ENCODE measurements at regions of chr11 and their contacts with region 1.

Region 1: GRCh38 chr11:47980245-47981049 is at the start of gene PTPRJ:
- DNase-seq: no peak
- H3K4me3 ChIP-seq: peak within 1 kb of the TSS; percentile 70 to 84 (median 78)
- H3K27ac ChIP-seq: peak within 1 kb of the TSS; percentile 68 to 74 (median 71)
- H3K4me1 ChIP-seq: peaks cover 15 to 28% (median 25%) of the 10 kb centered on the region in 4 donors
- H3K27me3 ChIP-seq: peaks cover 0 to 6% (median 0%) of the 10 kb centered on the region in 4 donors
- CTCF ChIP-seq: no peak
- EP300 ChIP-seq: no peak
- POLR2A ChIP-seq: no peak
- total RNA-seq, gene PTPRJ: 8.3 to 14.1 (median 10.5) TPM

Region 2: GRCh38 chr11:47946682-47947575 is 33.5 kb before region 1 on chr11:
- intact Hi-C with region 1: loop called (anchors 5 kb)
- DNase-seq: peak; percentile 92
- H3K4me3 ChIP-seq: no peak overlapping the region
- H3K27ac ChIP-seq: peak overlapping the region; percentile 25 to 64 (median 40)
- H3K4me1 ChIP-seq: peaks cover 2 to 16% (median 12%) of the 10 kb centered on the region in 4 donors
- H3K27me3 ChIP-seq: no peaks in the 10 kb centered on the region
- CTCF ChIP-seq: no peak
- EP300 ChIP-seq: no peak
- POLR2A ChIP-seq: no peak

Region 3: DNA sequence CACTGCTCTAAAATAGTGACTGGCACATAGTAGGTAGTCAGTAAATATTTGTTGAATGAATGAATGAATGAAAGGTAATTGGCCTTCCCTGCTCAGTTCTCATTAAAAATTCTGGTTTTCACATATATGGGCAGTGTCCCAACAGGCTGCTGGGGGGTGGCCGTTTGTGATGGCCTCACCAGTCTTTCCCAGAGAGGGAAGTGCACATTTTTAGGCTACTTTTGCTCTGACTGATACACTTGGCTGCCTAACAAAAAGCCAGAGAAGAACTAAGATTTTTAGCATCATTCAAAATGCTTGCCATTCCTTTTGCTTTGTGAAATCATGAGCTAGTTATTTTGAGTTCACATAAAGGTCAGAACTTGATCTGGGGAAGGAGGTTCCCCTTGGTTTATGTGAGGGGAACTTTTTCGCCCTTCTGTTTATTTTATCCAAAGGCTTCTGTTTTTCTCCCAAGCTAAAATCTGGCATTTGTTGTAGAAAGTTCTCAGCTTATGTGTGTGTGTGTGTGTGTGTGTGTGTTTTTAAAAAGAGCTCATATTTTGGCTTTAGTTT is 83.1 kb after region 1 on chr11:
- intact Hi-C with region 1: loop called (anchors 5 kb)
- DNase-seq: no peak
- H3K4me3 ChIP-seq: no peak overlapping the region
- H3K27ac ChIP-seq: peak overlapping the region; percentile 64 to 71 (median 70)
- H3K4me1 ChIP-seq: peaks cover 15 to 41% (median 30%) of the 10 kb centered on the region in 4 donors
- H3K27me3 ChIP-seq: no peaks in the 10 kb centered on the region
- CTCF ChIP-seq: no peak
- EP300 ChIP-seq: no peak
- POLR2A ChIP-seq: no peak

Region 4: DNA sequence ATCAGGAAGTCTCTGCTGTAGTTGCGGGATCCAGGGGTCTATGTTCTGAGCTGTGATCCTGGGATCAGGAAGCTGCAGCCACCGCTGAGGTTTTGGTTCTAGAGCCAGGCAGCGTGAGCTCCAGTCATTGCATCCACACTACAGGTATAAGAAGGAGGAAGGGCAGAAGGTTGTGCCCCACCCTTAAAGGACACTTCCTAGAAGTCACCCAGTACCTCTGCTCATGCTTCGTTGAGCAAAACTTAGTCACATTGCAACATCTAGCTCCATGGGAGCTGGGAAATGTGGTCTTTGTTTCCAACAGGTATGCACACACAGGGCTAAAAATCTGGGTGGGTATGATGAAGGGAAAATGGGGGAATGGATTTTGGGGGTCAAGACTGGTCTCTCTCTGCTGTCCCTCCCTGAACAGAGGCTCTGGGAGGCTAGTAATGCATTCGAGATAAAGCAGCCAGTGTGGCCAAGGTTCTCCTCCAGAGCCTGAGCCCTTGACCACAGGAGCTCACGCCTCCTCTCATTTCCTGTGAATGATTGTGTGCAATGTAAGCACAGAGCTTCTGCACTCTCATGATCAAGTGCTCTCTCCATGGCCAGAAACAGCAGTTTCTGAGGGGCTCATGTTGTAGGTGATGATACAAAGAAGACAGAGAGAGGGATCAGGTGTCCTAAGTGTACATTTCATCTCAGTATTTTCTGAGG is 149.4 kb after region 1 on chr11:
- intact Hi-C with region 1: no loop called
- DNase-seq: no peak
- H3K4me3 ChIP-seq: no peak overlapping the region
- H3K27ac ChIP-seq: no peak overlapping the region
- H3K4me1 ChIP-seq: no peaks in the 10 kb centered on the region
- H3K27me3 ChIP-seq: no peaks in the 10 kb centered on the region
- CTCF ChIP-seq: no peak
- EP300 ChIP-seq: no peak
- POLR2A ChIP-seq: no peak

Region 5: DNA sequence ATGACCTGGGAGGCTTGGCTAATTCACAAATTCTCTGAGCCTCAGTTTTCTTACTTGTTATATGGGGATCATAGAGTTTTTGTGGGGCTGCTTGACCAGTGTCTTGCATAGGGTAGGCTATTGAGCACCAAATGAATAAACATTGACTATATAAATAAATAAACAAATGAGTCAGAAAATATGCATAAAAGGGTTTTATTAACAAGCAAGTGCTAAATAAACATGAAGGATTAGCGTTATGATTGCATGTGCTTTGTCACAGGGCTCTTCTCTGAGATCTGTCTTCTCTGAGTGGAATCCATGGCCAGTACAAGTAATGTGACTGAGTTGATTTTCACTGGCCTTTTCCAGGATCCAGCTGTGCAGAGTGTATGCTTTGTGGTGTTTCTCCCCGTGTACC is 236.1 kb after region 1 on chr11 and contains the start of gene OR4B1:
- intact Hi-C with region 1: no loop called
- DNase-seq: no peak
- H3K4me3 ChIP-seq: no peak within 1 kb of the TSS
- H3K27ac ChIP-seq: no peak within 1 kb of the TSS
- H3K4me1 ChIP-seq: no peaks in the 10 kb centered on the region
- H3K27me3 ChIP-seq: no peaks in the 10 kb centered on the region
- CTCF ChIP-seq: no peak
- EP300 ChIP-seq: no peak
- POLR2A ChIP-seq: no peak
- total RNA-seq, gene OR4B1: not detected

Measured in esophagus muscularis mucosa (tissue), 4 donors.